ENCODE measurements at regions of chr2 and their contacts with region 1.

Region 1: DNA sequence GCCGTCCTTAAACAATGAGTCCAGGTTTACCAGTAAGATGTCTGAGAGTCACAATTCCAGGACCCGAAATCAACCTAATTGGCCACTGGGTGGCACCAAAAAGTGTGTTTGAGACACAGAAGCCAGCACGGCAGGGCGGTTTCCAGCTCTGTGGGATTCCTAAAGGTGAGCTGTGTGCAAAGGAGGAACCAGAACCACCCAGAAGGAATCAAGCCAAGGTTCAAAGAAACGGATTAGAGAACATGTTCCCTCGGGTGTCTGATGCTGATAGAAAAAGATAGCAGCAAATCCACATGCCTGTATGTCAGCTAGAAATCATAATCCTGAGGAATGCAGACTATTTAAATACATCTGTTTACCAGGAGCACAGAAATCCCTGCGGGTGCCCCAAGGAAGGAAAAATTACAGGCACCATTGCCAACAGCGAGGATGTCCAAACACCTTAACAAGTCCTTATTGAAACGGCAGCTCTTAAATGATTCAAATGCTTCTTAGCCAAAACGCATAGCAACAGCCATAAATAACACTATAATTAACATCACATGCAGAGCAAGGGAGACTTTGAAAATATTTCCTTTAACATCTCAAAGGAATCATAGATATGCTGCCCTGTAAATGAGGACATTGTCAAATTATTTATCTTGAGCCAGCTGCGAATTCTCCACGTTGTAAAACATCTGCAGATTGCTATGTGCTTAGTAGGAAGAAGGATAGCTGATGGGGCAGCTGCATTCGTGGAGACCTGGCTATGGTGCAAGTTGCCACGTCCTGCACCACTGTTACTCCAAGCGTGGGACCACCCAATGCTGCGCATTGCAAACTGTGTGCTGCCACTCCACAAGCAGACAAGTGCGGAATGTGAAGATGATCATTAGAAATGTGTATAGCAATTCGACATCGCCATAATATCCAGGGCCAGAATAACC is 318.7 kb upstream of the NCKAP5 start:
- DNase-seq: peak; percentile 77
- H3K4me3 ChIP-seq: no peak overlapping the region; the same call in 1 of the 2 replicates
- H3K27ac ChIP-seq: peak overlapping the region; percentile 75
- H3K27me3 ChIP-seq: peaks cover 3% of the 10 kb centered on the region
- CTCF ChIP-seq: peak; percentile 75

Region 2: DNA sequence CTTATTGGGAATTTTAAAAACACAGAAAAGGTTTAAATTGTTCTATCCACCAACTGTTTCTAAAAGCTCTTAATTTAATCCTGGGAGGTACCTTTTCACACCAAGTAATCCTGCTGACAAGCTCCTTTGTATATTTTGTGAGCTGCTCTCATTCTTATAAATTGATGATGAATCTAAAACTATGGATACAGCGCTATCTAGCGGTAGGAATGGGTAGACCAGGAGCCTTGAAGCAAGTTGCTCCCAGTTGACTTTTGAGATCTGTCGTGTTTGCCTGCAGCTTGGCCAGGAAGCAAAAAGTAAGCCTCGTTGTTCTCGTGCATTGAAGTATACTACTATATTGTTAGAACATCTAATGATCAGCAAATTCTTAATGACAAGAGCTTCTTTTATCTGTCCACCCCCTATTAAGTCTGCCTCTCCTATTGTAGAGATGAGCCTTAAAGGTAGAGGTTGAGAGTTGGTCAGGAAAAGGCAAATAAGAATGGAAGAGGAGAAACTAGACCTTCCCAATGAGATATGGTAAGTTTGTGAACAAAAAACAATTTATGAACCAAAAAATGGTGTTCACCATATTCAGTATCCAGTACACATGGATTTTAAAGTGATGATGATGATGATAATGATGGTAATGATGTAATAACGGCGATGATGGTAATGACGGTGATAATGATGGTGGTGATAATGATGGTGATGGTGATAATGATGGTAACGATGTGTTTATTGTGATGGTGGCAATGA is 106.7 kb before region 1 on chr2:
- CTCF ChIA-PET with region 1: no interaction called
- POLR2A ChIA-PET with region 1: no interaction called
- DNase-seq: peak; percentile 60
- H3K4me3 ChIP-seq: no peak overlapping the region
- H3K27ac ChIP-seq: no peak overlapping the region
- H3K27me3 ChIP-seq: no peaks in the 10 kb centered on the region
- CTCF ChIP-seq: peak; percentile 84

Region 3: GRCh38 chr2:134014196-134014960 is 127.4 kb after region 1 on chr2:
- CTCF ChIA-PET with region 1: interaction called, 3 read pairs
- POLR2A ChIA-PET with region 1: interaction called, 15 read pairs
- DNase-seq: peak; percentile 68
- H3K4me3 ChIP-seq: no peak overlapping the region
- H3K27ac ChIP-seq: peak overlapping the region; percentile 77
- H3K27me3 ChIP-seq: no peaks in the 10 kb centered on the region
- CTCF ChIP-seq: no peak

Region 4: GRCh38 chr2:134224005-134224404 is 337.0 kb after region 1 on chr2:
- CTCF ChIA-PET with region 1: interaction called, 12 read pairs
- POLR2A ChIA-PET with region 1: no interaction called
- DNase-seq: peak; percentile 46
- H3K4me3 ChIP-seq: no peak overlapping the region
- H3K27ac ChIP-seq: no peak overlapping the region
- H3K27me3 ChIP-seq: no peaks in the 10 kb centered on the region
- CTCF ChIP-seq: no peak

Region 5: DNA sequence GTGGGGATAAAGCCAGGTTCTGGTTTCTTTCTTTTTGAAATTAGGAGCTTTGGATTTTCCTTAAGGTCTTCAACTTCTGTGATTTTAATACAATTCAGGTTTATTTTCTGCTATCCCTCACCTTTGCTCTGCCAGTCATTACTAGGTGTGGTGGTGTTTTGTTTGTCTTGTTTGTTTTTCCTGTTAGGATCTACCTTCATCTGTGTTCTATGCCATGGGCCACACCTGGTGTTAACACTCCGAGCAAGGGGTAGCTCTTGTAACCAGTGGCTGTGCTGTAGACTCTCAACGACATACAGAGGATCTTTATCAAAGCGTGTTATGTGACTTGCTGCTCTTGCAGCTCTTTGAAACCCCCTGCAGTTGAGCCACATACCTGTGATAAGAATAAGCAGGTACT is 405.5 kb after region 1 on chr2:
- CTCF ChIA-PET with region 1: no interaction called
- POLR2A ChIA-PET with region 1: no interaction called
- DNase-seq: no peak
- H3K4me3 ChIP-seq: no peak overlapping the region
- H3K27ac ChIP-seq: no peak overlapping the region
- H3K27me3 ChIP-seq: no peaks in the 10 kb centered on the region
- CTCF ChIP-seq: no peak

Region 6: GRCh38 chr2:134411828-134412638 is 525.0 kb after region 1 on chr2:
- CTCF ChIA-PET with region 1: interaction called, 41 read pairs
- POLR2A ChIA-PET with region 1: no interaction called
- DNase-seq: no peak
- H3K4me3 ChIP-seq: no peak overlapping the region
- H3K27ac ChIP-seq: peak overlapping the region; percentile 4
- H3K27me3 ChIP-seq: no peaks in the 10 kb centered on the region
- CTCF ChIP-seq: peak; percentile 77

Region 7: DNA sequence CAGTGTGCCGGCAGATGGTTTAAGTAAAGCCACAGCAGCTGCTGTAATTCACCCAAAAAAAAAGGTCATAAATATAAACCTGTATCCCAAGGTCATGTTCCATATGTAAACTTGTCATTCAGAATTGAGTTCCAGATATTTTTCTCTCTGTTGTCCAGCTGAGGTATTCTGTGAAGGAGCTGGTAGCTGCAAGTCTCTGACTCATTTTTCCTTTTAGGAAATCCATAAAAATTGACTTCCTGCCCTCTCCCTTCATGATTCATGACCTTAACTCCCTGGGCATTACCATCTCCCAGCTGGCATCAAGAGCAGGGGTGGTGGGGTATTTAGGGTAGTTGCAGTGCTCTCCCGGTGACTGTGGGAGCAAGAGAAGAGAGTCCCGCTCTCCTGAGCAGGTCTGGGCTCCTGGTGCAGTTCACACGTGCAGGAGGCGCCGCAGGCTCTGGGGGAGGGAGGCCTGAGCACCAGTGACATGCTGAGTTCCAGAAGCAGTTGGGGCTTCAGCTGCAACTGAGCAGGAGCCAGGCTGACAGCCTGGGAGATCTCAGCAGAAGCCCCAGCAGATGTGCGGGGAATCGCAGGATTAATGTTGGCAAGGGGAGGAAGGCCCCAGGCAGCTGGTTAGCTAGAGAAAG is 559.5 kb after region 1 on chr2:
- CTCF ChIA-PET with region 1: interaction called, 96 read pairs
- POLR2A ChIA-PET with region 1: no interaction called
- DNase-seq: peak; percentile 6
- H3K4me3 ChIP-seq: no peak overlapping the region
- H3K27ac ChIP-seq: no peak overlapping the region
- H3K27me3 ChIP-seq: no peaks in the 10 kb centered on the region
- CTCF ChIP-seq: no peak